ENCODE measurements at regions of chrX and their contacts with region 1.

Region 1: DNA sequence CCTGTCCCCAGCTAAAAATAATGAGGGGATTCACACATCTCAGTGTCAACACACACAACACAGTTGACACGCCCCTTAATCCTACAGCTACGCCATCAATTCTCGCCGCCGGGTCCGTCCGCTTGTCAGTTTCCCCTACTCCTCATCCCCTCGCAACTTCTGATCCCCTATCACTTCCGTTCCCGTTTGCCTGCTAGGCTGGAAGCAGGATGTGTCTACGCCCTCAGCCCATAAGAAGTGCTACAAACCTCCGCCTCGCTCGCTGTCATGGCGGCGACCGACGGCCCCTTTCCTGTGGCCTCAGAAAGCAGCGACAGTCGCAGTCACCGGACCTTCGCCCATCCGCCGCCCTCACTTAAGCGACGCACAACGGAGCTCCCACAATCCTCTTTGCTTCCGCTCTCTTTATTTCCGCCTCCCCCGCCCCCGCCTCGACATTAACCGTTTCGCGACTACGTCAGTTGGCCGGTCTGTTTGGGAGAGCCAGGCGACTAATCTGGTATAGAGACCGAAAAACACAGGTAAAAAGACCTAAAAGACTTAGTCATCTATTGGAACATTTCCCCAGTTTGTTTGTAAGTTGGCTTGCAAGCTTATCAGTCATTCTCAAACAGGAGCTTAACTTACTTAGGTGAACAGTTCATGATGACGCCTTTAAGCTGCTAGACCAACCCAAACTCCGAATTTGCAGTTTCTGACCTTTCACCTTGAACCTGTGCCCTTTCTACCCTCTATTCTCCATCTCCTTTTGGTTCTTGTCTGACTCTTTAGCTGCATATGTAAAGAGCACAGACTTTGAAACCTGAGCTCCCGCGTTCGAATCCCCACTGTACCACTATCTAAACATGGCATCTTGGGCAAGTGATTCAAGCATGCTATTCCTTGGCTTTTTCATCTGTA is at the start of gene SLC25A53:
- DNase-seq: peak; percentile 85
- H3K4me3 Mint-ChIP-seq: peak within 1 kb of the TSS; percentile 92
- H3K27ac Mint-ChIP-seq: peak within 1 kb of the TSS; percentile 98
- H3K4me1 Mint-ChIP-seq: peaks cover 9% of the 10 kb centered on the region
- H3K27me3 Mint-ChIP-seq: no peaks in the 10 kb centered on the region
- total RNA-seq, gene SLC25A53: 4.6 to 5.0 TPM

Region 2: DNA sequence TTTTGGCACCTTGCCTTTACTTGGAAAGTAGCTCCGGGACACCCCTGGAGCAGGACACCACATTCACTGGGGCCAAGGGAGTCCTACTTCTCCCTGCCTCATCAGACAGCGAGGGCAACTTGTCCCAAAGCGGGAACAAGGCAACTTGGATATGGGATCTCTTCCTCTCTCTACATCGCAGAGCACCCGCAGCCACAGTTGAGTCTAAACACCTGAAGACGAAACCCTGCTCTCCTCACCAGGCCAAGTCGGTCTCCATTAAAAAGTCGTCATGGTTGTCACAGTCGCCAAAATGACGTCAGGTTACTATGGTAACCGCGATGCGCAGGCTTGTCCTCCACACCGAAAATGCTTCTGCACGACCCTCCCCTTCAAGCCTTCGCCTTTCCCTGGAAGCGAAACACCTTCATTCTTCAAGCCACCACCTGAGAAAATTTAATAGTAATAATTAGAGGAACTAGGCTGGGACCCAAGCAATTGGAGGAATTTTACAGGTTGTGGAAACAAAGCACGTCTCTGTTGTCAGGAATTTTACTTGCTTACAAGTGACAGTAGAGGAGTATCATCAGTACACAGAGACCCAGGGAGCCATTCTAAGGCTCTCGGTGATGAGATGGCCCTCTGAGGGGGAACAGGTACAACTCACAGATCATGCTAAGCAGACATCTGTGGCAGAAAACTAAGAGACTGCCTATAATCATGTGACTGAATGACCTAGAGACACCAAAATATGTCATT is 602.0 kb before region 1 on chrX:
- CTCF ChIA-PET with region 1: no interaction called
- intact Hi-C with region 1: loop called (anchors 10 kb)
- DNase-seq: peak; percentile 82
- H3K4me3 Mint-ChIP-seq: peak overlapping the region; percentile 80
- H3K27ac Mint-ChIP-seq: peak overlapping the region; percentile 54
- H3K4me1 Mint-ChIP-seq: no peaks in the 10 kb centered on the region
- H3K27me3 Mint-ChIP-seq: no peaks in the 10 kb centered on the region

Region 3: GRCh38 chrX:104113222-104113965 is 43.5 kb before region 1 on chrX:
- CTCF ChIA-PET with region 1: no interaction called
- intact Hi-C with region 1: loop called (anchors 2 kb)
- DNase-seq: peak; percentile 62
- H3K4me3 Mint-ChIP-seq: peak overlapping the region; percentile 74
- H3K27ac Mint-ChIP-seq: no peak overlapping the region
- H3K4me1 Mint-ChIP-seq: peaks cover 33% of the 10 kb centered on the region
- H3K27me3 Mint-ChIP-seq: no peaks in the 10 kb centered on the region

Region 4: GRCh38 chrX:104136241-104137019 is 20.4 kb before region 1 on chrX:
- CTCF ChIA-PET with region 1: interaction called, 5 read pairs
- intact Hi-C with region 1: loop called (anchors 1 kb)
- DNase-seq: peak; percentile 63
- H3K4me3 Mint-ChIP-seq: no peak overlapping the region
- H3K27ac Mint-ChIP-seq: no peak overlapping the region
- H3K4me1 Mint-ChIP-seq: peaks cover 15% of the 10 kb centered on the region
- H3K27me3 Mint-ChIP-seq: no peaks in the 10 kb centered on the region